ENCODE measurements at regions of chr17 and their contacts with region 1.

Region 1: GRCh38 chr17:42819944-42820535 is 4.0 kb downstream of the BECN1 start:
- DNase-seq: no peak
- H3K4me3 ChIP-seq: no peak overlapping the region
- CTCF ChIP-seq: peak; percentile 66

Region 2: GRCh38 chr17:42642336-42642735 is 177.7 kb before region 1 on chr17:
- CTCF ChIA-PET with region 1: no interaction called
- POLR2A ChIA-PET with region 1: no interaction called
- DNase-seq: no peak
- H3K4me3 ChIP-seq: no peak overlapping the region
- CTCF ChIP-seq: no peak

Region 3: DNA sequence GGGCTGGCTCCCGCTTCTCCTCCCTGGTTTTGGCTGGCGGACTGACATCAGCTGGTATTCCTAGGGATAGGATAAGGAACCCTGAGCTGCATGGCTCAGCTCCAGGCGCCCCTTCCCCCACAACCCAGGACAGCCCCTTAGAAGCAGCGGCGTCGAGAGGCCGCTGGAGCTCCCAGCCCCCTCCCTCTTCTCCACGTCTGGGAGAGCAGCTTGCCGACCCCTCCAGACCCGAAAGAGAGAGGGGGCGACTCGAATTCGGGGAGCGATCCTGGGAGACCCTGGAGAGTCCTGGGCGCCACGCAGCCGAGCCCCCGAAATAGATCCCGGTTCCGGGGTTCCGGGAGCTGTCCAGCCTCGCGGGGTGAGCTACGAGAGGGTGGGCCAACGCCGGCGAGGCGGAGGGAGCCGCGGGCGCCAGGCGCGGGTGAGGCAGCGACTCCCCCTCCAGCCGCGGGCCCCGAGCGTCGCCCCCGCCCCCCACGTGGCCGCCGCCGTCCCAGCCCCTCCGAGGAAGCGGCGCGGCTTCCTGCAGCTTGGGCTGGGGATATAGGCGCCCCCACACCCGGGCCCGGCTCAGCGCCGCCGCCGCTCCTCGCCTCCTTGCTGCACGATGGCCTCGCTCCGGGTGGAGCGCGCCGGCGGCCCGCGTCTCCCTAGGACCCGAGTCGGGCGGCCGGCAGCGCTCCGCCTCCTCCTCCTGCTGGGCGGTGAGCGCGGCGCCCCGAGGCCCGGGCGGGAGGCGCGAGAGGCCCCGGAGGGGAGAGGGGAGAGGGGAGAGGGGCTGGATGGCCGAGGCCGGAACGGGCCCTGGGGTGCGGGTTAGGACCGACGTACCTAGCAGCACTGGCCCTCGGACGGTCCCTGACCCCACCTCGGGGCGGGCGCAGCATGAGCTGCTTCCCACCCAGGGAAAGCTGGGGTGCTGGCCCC is 59.1 kb before region 1 on chr17 and contains the start of gene RAMP2:
- CTCF ChIA-PET with region 1: interaction called, 39 read pairs
- POLR2A ChIA-PET with region 1: no interaction called
- DNase-seq: no peak
- H3K4me3 ChIP-seq: peak within 1 kb of the TSS; percentile 50
- CTCF ChIP-seq: no peak

Region 4: DNA sequence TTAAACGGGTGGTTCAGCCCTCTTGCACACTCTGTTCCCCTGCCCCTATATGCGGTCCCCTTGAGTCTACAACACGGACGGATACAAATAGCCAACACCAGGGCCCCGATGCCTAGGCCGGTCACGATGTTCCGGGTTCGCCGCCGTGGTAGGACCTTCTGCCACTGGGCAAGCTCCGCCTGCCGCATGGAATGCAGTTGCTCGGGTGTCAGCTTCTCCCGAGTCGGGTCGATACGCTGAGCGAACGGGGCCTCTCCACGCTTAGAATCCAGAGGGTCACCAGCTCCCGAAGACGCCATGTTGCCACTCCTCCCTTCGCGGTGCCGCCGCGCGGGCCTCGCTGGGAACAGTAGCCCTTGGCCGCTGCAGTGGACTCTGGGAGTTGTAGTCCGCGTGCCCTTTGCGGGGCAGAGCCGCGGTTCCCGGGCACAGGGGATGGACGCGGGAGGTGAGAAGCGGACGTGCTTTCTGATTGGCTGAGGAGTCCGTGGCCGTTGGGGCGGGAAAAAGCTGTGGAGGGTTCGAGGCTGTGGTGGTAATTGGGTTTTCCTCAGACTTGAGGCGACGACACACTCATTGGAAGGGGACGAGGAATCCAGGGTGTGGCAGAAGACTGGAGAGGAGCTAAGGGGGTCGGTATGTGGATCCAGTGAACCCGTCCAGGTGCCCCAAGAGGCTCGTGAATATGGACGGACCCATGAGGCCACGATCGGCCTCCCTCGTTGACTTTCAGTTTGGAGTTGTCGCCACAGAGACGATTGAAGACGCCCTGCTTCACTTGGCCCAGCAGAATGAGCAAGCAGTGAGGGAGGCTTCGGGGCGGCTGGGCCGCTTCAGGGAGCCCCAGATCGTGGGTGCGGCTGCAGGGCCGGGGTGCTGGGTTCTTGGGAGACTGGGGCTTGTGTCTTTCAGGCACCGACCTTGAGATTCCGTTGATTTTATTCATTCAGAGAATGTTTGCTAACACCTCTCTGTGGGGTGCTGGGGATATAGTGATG is 21.4 kb before region 1 on chr17 and contains the starts of genes CNTD1 and COA3:
- CTCF ChIA-PET with region 1: interaction called, 11 read pairs
- POLR2A ChIA-PET with region 1: interaction called, 3 read pairs
- DNase-seq: no peak
- H3K4me3 ChIP-seq: peak within 1 kb of the TSS; percentile 89
- CTCF ChIP-seq: no peak

Region 5: GRCh38 chr17:42832974-42833766 is 13.1 kb after region 1 on chr17 and contains the start of gene PSME3:
- CTCF ChIA-PET with region 1: interaction called, 133 read pairs
- POLR2A ChIA-PET with region 1: interaction called, 5 read pairs
- DNase-seq: no peak
- H3K4me3 ChIP-seq: peak within 1 kb of the TSS; percentile 94
- CTCF ChIP-seq: no peak

Region 6: GRCh38 chr17:42895185-42895555 is 75.1 kb after region 1 on chr17:
- CTCF ChIA-PET with region 1: no interaction called
- POLR2A ChIA-PET with region 1: no interaction called
- DNase-seq: peak; percentile 14
- H3K4me3 ChIP-seq: no peak overlapping the region
- CTCF ChIP-seq: no peak

Region 7: DNA sequence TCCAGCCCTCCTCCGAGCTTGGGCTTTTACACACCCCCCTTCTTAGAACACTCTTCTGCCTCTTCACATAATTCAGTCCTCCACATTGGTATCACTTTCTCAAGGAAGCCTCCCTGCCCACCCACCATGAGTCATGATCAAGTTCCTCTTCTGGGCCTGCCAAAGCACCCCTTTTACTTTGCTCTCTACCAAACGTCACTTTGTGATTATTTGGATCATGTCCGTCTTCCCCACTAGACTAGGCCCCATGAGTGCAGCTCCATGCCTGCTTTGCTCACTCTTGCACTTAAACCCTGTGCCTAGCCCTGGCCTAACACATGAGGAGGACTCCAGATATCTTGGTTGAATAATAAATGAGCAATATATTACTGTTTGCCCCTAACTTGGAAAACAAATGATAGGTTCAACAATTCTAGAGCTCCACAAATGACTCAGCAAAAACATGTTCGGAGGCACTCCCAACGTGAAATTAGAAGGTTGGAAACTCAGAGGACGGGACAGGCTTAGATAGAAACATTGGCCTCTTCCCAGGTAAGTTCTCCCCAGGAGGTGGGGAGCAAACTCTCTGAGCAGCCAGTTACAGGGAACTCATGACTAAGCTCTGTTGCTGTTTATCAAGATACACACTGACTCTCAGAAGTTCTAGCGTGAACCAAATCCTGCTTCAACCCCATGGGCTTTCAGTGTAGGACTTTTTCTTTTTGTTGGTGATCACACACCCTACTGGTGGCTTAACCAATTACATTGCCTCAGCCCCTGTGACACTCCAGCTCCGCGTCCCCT is 108.9 kb after region 1 on chr17:
- CTCF ChIA-PET with region 1: interaction called, 15 read pairs
- POLR2A ChIA-PET with region 1: no interaction called
- DNase-seq: peak; percentile 28
- H3K4me3 ChIP-seq: no peak overlapping the region
- CTCF ChIP-seq: peak; percentile 41

Measured in AG04449 (cell line).